ENCODE measurements at regions of chr12 and their contacts with region 1.

Region 1: DNA sequence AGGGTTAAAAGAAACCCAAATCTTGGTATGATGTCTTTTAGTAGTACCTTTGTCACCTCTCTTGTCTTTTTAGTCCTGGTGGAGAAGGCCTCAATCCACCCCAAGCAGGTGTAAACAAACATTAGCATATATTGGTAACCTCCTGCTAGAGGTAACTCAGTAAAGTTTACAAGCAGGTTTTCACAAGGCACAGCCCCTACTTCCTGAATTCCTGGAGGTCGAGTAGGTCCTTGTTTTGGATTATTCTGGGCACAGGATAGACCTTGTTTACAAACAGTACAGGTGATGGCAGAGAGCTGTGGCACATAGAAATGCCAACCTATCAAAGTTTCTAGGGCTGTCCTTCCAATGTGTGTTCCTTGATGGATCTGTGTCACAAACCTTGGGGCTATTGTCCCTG is 99.1 kb downstream of the ALG10 start:
- DNase-seq: no peak
- ATAC-seq: no peak
- H3K4me3 ChIP-seq: no peak overlapping the region
- H3K27ac ChIP-seq: no peak overlapping the region
- H3K4me1 ChIP-seq: no peaks in the 10 kb centered on the region
- CTCF ChIP-seq: no peak
- EP300 ChIP-seq: no peak
- POLR2A ChIP-seq: no peak
- RAD21 ChIP-seq: no peak

Region 2: GRCh38 chr12:34166427-34167060 is 45.2 kb after region 1 on chr12:
- CTCF ChIA-PET with region 1: interaction called, 11 read pairs
- POLR2A ChIA-PET with region 1: no interaction called
- DNase-seq: no peak
- ATAC-seq: no peak
- H3K4me3 ChIP-seq: no peak overlapping the region
- H3K27ac ChIP-seq: no peak overlapping the region
- H3K4me1 ChIP-seq: no peaks in the 10 kb centered on the region
- CTCF ChIP-seq: no peak
- EP300 ChIP-seq: no peak
- POLR2A ChIP-seq: no peak
- RAD21 ChIP-seq: no peak

Region 3: DNA sequence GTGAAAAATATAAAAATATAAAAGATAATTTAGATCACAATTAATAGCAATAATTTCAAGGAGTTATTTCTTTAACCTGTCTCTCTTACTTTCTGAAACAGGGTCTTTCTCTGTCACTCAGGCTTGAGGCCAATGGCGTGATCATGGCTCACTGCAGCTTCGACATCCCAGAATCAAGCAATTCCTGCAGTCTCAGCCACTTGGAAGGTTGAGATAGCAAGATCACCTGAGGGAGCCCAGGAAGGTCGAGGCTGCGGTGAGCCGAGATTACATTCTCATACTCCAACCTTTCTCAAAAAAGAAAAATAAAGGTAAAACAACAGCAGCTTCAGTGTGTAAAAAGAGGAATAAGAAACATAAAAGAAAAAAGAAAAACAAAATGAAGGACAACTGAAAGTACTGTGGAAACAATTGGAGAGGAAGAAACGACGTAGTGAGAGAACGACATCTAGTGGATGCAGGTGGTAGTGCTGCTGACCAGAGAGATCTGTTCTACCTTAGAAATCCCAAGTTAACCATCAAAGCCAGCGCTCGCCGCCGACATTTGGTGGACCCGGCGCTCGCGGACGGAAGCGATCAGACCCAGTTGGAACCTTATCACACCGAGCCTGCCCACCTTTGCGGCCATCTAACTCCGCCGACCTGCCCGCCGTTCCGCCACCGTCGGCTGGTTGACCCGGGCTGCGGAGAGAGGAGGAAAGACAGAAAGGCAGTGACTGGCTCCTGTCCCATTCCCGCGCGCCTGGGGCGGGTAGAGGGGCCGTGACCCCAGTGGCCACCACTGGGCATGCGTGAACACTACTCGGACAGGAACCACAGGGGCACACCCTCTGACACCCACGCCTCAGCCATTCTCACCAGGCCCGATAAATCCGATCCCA is 97.0 kb after region 1 on chr12:
- CTCF ChIA-PET with region 1: interaction called, 15 read pairs
- POLR2A ChIA-PET with region 1: no interaction called
- DNase-seq: peak; percentile 33 to 81
- ATAC-seq: peak; percentile 89 to 93
- H3K4me3 ChIP-seq: peak overlapping the region; percentile 47
- H3K27ac ChIP-seq: peak overlapping the region; percentile 21 to 70; a peak in 3 of 6 replicates
- H3K4me1 ChIP-seq: no peaks in the 10 kb centered on the region
- CTCF ChIP-seq: peak; percentile 86
- EP300 ChIP-seq: no peak
- POLR2A ChIP-seq: no peak
- RAD21 ChIP-seq: peak; percentile 73 to 81

Measured in A549 (cell line).